Activated T-helper 2 cell treated with anti-CD3 and anti-CD28 coated beads, Interferon-gamma antibody, Interleukin-2, Interleukin-4, amounts not matched to agents 10 μg/mL and 5 μg/mL and 100 μg/mL, durations not matched to agents 14 hours and 24 hours and 36 hours (primary cell): ENCODE measurements at regions of chr1 and their contacts with region 1.

Region 1: GRCh38 chr1:151311589-151312331 is 15.5 kb downstream of the PI4KB start:
- DNase-seq: peak; percentile 37
- H3K4me3 Mint-ChIP-seq: no peak overlapping the region
- H3K27ac Mint-ChIP-seq: peak overlapping the region; percentile 97
- H3K4me1 Mint-ChIP-seq: peaks cover 21% of the 10 kb centered on the region
- H3K27me3 Mint-ChIP-seq: no peaks in the 10 kb centered on the region

Region 2: GRCh38 chr1:151210830-151211229 is 100.9 kb before region 1 on chr1:
- intact Hi-C with region 1: no loop called
- DNase-seq: no peak
- H3K4me3 Mint-ChIP-seq: no peak overlapping the region
- H3K27ac Mint-ChIP-seq: peak overlapping the region; percentile 67
- H3K4me1 Mint-ChIP-seq: peaks cover 23% of the 10 kb centered on the region
- H3K27me3 Mint-ChIP-seq: no peaks in the 10 kb centered on the region

Region 3: GRCh38 chr1:151327223-151327902 is 15.6 kb after region 1 on chr1 and contains the start of gene PI4KB:
- intact Hi-C with region 1: loop called (anchors 1 kb)
- DNase-seq: peak; percentile 88
- H3K4me3 Mint-ChIP-seq: peak within 1 kb of the TSS; percentile 93
- H3K27ac Mint-ChIP-seq: peak within 1 kb of the TSS; percentile 98
- H3K4me1 Mint-ChIP-seq: peaks cover 33% of the 10 kb centered on the region
- H3K27me3 Mint-ChIP-seq: no peaks in the 10 kb centered on the region
- total RNA-seq, gene PI4KB: 53.6 and 57.3 TPM in 2 replicates